Colonic mucosa (tissue), 4 donors: ENCODE measurements at regions of chr14 and their contacts with region 1.

Region 1: DNA sequence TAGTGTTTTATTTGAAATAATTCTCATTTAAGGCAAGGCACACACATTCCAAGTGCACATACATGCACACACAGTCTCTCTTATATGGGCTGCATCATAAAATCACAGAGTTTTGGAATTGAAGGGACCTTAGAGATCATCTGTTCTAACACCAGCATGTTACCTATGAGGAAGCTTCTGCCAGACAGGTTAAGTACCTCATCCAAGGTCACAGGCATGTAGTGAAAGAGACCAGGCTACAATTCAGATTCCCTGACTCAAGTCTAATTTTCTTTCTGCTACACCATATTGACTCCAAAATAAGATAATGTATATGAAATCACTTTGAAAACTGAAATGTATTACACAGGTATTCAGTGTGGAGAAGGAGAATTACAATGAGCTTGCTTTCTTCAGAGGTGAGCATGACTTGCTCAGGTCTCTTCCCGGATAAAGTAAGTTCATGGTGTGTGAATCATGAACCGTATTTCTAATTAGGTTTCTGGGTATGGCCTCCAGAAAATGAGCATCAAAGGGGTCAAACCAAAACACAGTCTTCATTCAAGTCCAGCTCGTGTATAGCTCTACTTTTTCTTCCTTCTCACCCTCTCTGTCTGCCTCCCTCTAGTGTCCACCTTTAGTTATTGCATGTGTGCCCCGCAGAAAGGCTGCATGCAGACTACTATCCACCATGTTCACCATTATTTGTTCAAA is 411.9 kb downstream of the FUT8 start:
- DNase-seq: peak; percentile 68
- H3K4me3 ChIP-seq: no peak overlapping the region
- H3K27ac ChIP-seq: no peak overlapping the region
- H3K4me1 ChIP-seq: no peaks in the 10 kb centered on the region
- H3K27me3 ChIP-seq: no peaks in the 10 kb centered on the region
- CTCF ChIP-seq: peak; percentile 96

Region 2: DNA sequence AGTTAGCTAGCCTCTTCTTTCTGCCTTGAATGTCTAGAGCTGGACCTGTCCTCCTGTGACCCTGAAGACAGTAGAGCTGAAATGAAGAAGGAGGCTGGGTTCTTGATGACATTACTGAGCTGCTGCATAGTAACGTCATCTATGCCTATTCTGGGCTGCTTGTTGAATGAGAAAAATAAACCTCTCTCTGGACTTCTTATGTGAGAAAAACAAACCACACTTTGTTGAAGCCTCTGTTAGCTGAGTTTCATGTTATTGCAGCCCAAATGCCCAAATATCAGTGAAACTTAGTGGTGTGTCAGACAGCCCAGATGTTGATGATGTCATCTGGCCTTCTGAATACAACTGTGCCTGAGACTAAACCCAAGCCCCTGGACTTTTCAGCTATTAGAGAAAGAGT is 655.1 kb before region 1 on chr14:
- intact Hi-C with region 1: loop called (anchors 5 kb)
- DNase-seq: no peak
- H3K4me3 ChIP-seq: no peak overlapping the region
- H3K27ac ChIP-seq: no peak overlapping the region
- H3K4me1 ChIP-seq: no peaks in the 10 kb centered on the region
- H3K27me3 ChIP-seq: no peaks in the 10 kb centered on the region
- CTCF ChIP-seq: no peak

Region 3: GRCh38 chr14:65222440-65222858 is 602.0 kb before region 1 on chr14:
- intact Hi-C with region 1: loop called (anchors 5 kb)
- DNase-seq: peak; percentile 77
- H3K4me3 ChIP-seq: no peak overlapping the region
- H3K27ac ChIP-seq: no peak overlapping the region
- H3K4me1 ChIP-seq: no peaks in the 10 kb centered on the region
- H3K27me3 ChIP-seq: no peaks in the 10 kb centered on the region
- CTCF ChIP-seq: peak; percentile 86

Region 4: GRCh38 chr14:65421201-65421981 is 403.0 kb before region 1 on chr14:
- intact Hi-C with region 1: loop called (anchors 5 kb)
- DNase-seq: no peak
- H3K4me3 ChIP-seq: no peak overlapping the region
- H3K27ac ChIP-seq: no peak overlapping the region
- H3K4me1 ChIP-seq: no peaks in the 10 kb centered on the region
- H3K27me3 ChIP-seq: no peaks in the 10 kb centered on the region
- CTCF ChIP-seq: no peak

Region 5: GRCh38 chr14:66746316-66747006 is 922.0 kb after region 1 on chr14:
- intact Hi-C with region 1: no loop called
- DNase-seq: no peak
- H3K4me3 ChIP-seq: no peak overlapping the region
- H3K27ac ChIP-seq: no peak overlapping the region
- H3K4me1 ChIP-seq: no peaks in the 10 kb centered on the region
- H3K27me3 ChIP-seq: no peaks in the 10 kb centered on the region
- CTCF ChIP-seq: peak; percentile 43